ENCODE measurements at regions of chrX and their contacts with region 1.

Region 1: GRCh38 chrX:135521405-135522189 is 1.1 kb downstream of the INTS6L start:
- DNase-seq: peak; percentile 62 to 96 (median 79)
- ATAC-seq: peak; percentile 67
- H3K4me3 ChIP-seq: peak overlapping the region; percentile 89
- H3K4me3 Mint-ChIP-seq: peak overlapping the region; percentile 98
- H3K27ac ChIP-seq: peak overlapping the region; percentile 78 to 85
- H3K27ac Mint-ChIP-seq: peak overlapping the region; percentile 95
- H3K4me1 ChIP-seq: peaks cover 12% of the 10 kb centered on the region
- H3K4me1 Mint-ChIP-seq: peaks cover 51% of the 10 kb centered on the region
- H3K27me3 ChIP-seq: no peaks in the 10 kb centered on the region
- H3K27me3 Mint-ChIP-seq: no peaks in the 10 kb centered on the region
- CTCF ChIP-seq: no peak

Region 2: DNA sequence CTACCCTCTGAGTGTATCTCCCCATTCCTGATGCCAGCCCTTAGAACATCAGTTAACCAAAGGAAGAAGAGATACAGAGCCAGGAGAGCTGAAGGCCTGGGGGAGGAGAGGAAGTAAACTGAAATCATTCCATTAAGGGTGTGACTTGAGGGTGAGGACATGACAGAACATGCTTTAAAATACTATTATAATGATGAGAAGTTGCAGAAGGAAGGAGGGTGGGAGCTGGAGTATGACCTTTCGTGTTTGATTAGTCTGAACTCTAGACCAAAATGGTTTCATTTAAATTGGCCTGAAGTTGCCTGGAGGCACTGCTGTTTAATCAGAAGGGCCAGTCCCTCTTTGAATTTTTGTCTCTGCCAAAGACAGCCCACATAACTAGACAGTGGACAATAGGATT is 10.2 kb after region 1 on chrX:
- CTCF ChIA-PET with region 1: no interaction called
- POLR2A ChIA-PET with region 1: interaction called, 39 read pairs
- intact Hi-C with region 1: loop called in 1 of 2 experiments (anchors 2 kb)
- DNase-seq: no peak
- ATAC-seq: no peak
- H3K4me3 ChIP-seq: no peak overlapping the region
- H3K4me3 Mint-ChIP-seq: no peak overlapping the region
- H3K27ac ChIP-seq: no peak overlapping the region
- H3K27ac Mint-ChIP-seq: peak overlapping the region; percentile 54
- H3K4me1 ChIP-seq: peaks cover 8% of the 10 kb centered on the region
- H3K4me1 Mint-ChIP-seq: peaks cover 81% of the 10 kb centered on the region
- H3K27me3 ChIP-seq: no peaks in the 10 kb centered on the region
- H3K27me3 Mint-ChIP-seq: no peaks in the 10 kb centered on the region
- CTCF ChIP-seq: no peak

Region 3: GRCh38 chrX:135536877-135537276 is 15.3 kb after region 1 on chrX:
- CTCF ChIA-PET with region 1: no interaction called
- POLR2A ChIA-PET with region 1: interaction called, 39 read pairs
- intact Hi-C with region 1: loop called in 1 of 2 experiments (anchors 2 kb)
- DNase-seq: peak in 3 of 14 experiments; percentile 26 to 31 (median 27)
- ATAC-seq: peak; percentile 85
- H3K4me3 ChIP-seq: no peak overlapping the region
- H3K4me3 Mint-ChIP-seq: peak overlapping the region; percentile 62
- H3K27ac ChIP-seq: peak overlapping the region in 1 of 2 donors; percentile 13
- H3K27ac Mint-ChIP-seq: peak overlapping the region; percentile 77
- H3K4me1 ChIP-seq: peaks cover 13% of the 10 kb centered on the region
- H3K4me1 Mint-ChIP-seq: peaks cover 74% of the 10 kb centered on the region
- H3K27me3 ChIP-seq: no peaks in the 10 kb centered on the region
- H3K27me3 Mint-ChIP-seq: no peaks in the 10 kb centered on the region
- CTCF ChIP-seq: no peak

Region 4: GRCh38 chrX:135543924-135544323 is 22.3 kb after region 1 on chrX:
- CTCF ChIA-PET with region 1: interaction called, 14 read pairs
- POLR2A ChIA-PET with region 1: interaction called, 39 read pairs
- intact Hi-C with region 1: no loop called
- DNase-seq: peak in 7 of 14 experiments; percentile 11 to 61 (median 32)
- ATAC-seq: no peak
- H3K4me3 ChIP-seq: no peak overlapping the region
- H3K4me3 Mint-ChIP-seq: no peak overlapping the region
- H3K27ac ChIP-seq: no peak overlapping the region
- H3K27ac Mint-ChIP-seq: peak overlapping the region; percentile 70
- H3K4me1 ChIP-seq: peaks cover 10% of the 10 kb centered on the region
- H3K4me1 Mint-ChIP-seq: peaks cover 45% of the 10 kb centered on the region
- H3K27me3 ChIP-seq: no peaks in the 10 kb centered on the region
- H3K27me3 Mint-ChIP-seq: no peaks in the 10 kb centered on the region
- CTCF ChIP-seq: peak; percentile 38

Region 5: GRCh38 chrX:135572436-135572835 is 50.8 kb after region 1 on chrX:
- CTCF ChIA-PET with region 1: no interaction called
- POLR2A ChIA-PET with region 1: no interaction called
- intact Hi-C with region 1: loop called in 1 of 2 experiments (anchors 10 kb)
- DNase-seq: peak in 2 of 14 experiments; percentile 4 to 7
- ATAC-seq: no peak
- H3K4me3 ChIP-seq: no peak overlapping the region
- H3K4me3 Mint-ChIP-seq: no peak overlapping the region
- H3K27ac ChIP-seq: no peak overlapping the region
- H3K27ac Mint-ChIP-seq: no peak overlapping the region
- H3K4me1 ChIP-seq: no peaks in the 10 kb centered on the region
- H3K4me1 Mint-ChIP-seq: no peaks in the 10 kb centered on the region
- H3K27me3 ChIP-seq: no peaks in the 10 kb centered on the region
- H3K27me3 Mint-ChIP-seq: no peaks in the 10 kb centered on the region
- CTCF ChIP-seq: peak; percentile 41

Region 6: DNA sequence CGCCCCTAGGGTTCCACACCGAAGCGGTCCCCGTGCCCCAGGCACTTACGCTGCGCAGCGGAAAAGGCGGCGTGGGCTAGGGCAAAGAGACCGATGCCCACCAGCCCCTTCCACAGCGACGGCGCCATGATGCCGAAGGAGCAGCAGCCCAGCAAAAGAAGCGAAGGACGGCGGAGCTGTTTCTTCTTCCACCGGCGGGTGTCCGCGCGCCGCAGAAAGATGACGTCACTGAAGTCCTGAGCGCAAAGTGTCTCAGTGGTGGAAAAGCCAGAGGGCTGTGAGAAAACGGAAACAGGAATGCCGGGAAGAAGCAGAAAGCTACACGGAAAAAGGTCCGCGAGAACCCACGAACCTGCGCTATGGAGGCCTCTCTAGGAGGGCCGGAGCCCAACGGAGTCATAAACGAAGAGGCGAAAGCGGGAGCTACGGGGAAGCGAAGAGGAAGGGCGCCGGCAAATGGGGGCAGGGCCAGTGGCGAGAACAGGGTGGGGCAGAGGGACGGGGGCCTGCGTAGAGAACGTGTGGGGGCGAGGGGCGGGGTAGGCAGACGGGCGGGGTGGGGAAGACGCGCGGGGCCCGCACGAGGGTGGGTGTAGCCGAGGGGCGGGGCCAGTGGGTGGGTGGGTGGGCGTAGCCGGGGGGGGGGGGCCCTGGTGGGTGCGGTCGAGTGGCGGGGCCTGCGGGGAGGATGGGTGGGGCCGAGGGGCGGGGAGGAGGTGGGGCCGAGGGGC is 452.1 kb after region 1 on chrX and contains the start of gene MMGT1:
- CTCF ChIA-PET with region 1: no interaction called
- POLR2A ChIA-PET with region 1: interaction called, 3 read pairs
- intact Hi-C with region 1: loop called in 1 of 2 experiments (anchors 5 kb)
- DNase-seq: peak; percentile 63 to 92 (median 76)
- ATAC-seq: peak; percentile 84
- H3K4me3 ChIP-seq: peak within 1 kb of the TSS; percentile 92
- H3K4me3 Mint-ChIP-seq: peak within 1 kb of the TSS; percentile 95
- H3K27ac ChIP-seq: peak within 1 kb of the TSS; percentile 79 to 89
- H3K27ac Mint-ChIP-seq: peak within 1 kb of the TSS; percentile 97
- H3K4me1 ChIP-seq: peaks cover 13% of the 10 kb centered on the region
- H3K4me1 Mint-ChIP-seq: peaks cover 48% of the 10 kb centered on the region
- H3K27me3 ChIP-seq: no peaks in the 10 kb centered on the region
- H3K27me3 Mint-ChIP-seq: no peaks in the 10 kb centered on the region
- CTCF ChIP-seq: no peak
- total RNA-seq, gene MMGT1: 36.4 to 37.0 TPM